Dendritic cell treated with granulocyte-macrophage colony-stimulating factor and Interleukin-4, amounts not matched to agents 40 ng/mL and 50 ng/mL, for 4 days (primary cell): ENCODE measurements at regions of chr1 and their contacts with region 1.

Region 1: GRCh38 chr1:186722711-186723309 is 42.6 kb upstream of the PTGS2 start:
- H3K4me3 Mint-ChIP-seq: no peak overlapping the region
- H3K27ac Mint-ChIP-seq: no peak overlapping the region
- H3K4me1 Mint-ChIP-seq: no peaks in the 10 kb centered on the region
- H3K27me3 Mint-ChIP-seq: no peaks in the 10 kb centered on the region

Region 2: DNA sequence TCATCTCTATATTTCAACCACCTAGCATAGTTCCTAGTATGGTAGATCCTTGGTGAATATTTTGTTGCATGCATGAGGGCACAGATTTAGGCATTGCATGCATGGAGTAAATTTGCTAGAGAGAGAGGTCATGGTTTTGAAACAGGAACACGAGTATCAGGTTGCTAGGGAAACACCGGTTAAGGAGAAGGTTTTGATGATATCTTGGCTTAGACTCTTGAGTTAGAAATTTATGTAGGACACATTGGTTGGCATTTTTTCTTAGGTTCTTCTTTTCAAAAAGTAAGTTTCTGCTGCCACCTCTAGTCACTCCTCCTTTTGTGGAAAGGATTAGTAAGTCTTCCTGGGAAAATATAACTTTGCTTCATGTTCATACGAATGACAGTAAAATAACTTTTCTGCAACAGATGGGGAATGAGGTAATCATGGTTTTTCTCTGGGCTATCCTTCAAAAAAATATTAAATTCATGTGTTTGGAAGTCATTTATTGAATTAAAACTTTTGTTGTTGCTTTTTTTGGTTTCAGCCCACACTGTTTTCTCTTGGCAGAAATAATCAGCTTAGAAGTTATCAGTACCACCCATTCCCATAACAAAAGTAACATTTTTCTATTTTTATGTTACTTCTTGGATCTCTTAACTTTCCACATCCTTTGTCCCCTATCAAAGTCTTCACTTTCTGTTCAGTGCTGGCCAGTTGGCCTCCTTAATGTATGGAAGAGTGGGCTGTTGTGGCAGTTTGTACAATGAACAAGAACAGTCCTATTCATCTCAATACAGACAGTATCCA is 203.3 kb after region 1 on chr1:
- intact Hi-C with region 1: loop called (anchors 10 kb)
- H3K4me3 Mint-ChIP-seq: no peak overlapping the region
- H3K27ac Mint-ChIP-seq: no peak overlapping the region
- H3K4me1 Mint-ChIP-seq: peaks cover 22% of the 10 kb centered on the region
- H3K27me3 Mint-ChIP-seq: no peaks in the 10 kb centered on the region